ENCODE measurements at regions of chr3 and their contacts with region 1.

Region 1: GRCh38 chr3:106206146-106206545 is 337.3 kb upstream of the CBLB start:
- DNase-seq: no peak
- H3K4me3 Mint-ChIP-seq: peak overlapping the region; percentile 43
- H3K27ac Mint-ChIP-seq: peak overlapping the region; percentile 86
- H3K4me1 Mint-ChIP-seq: peaks cover 46% of the 10 kb centered on the region
- H3K27me3 Mint-ChIP-seq: no peaks in the 10 kb centered on the region

Region 2: DNA sequence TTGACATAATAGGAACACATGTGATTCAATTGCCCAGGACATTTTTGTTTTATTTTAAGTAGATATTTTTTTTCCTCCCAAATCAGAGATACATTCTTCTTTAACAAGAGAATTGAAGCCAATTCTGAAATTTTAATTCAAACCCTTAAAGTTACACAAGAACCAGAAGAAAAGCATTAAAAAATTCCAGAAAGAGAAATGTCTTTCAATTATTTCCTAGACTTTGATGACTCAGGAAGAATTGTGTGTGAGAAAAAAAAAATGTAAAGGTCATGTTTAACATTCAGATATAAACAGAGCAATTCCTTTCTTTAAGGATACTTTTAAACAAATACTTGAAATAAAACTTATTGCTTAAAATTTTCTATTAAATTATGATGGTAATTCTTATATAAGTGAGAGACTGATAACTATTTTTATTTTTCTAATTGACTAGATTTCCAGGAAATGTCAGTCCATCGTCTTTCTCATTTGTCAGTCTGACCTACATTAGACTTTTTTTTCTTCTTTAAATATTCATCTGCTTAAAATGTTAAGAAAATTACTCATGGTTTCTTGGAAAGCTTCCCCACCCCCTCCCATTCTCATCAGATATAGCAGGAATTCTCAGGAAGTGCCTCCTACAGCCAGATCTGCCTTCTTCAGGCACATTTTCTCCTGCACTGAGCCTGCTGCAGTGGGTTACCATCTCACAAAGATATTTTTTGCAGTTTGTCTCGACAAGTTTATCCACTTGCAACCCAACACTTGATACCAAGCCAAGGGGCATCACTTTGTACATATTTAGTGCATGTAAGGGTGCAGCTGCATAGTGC is 75.6 kb before region 1 on chr3:
- intact Hi-C with region 1: loop called (anchors 5 kb)
- DNase-seq: no peak
- H3K4me3 Mint-ChIP-seq: no peak overlapping the region
- H3K27ac Mint-ChIP-seq: peak overlapping the region; percentile 48
- H3K4me1 Mint-ChIP-seq: peaks cover 14% of the 10 kb centered on the region
- H3K27me3 Mint-ChIP-seq: no peaks in the 10 kb centered on the region

Region 3: GRCh38 chr3:106167728-106168127 is 38.4 kb before region 1 on chr3:
- intact Hi-C with region 1: no loop called
- DNase-seq: no peak
- H3K4me3 Mint-ChIP-seq: no peak overlapping the region
- H3K27ac Mint-ChIP-seq: no peak overlapping the region
- H3K4me1 Mint-ChIP-seq: peaks cover 24% of the 10 kb centered on the region
- H3K27me3 Mint-ChIP-seq: no peaks in the 10 kb centered on the region

Region 4: DNA sequence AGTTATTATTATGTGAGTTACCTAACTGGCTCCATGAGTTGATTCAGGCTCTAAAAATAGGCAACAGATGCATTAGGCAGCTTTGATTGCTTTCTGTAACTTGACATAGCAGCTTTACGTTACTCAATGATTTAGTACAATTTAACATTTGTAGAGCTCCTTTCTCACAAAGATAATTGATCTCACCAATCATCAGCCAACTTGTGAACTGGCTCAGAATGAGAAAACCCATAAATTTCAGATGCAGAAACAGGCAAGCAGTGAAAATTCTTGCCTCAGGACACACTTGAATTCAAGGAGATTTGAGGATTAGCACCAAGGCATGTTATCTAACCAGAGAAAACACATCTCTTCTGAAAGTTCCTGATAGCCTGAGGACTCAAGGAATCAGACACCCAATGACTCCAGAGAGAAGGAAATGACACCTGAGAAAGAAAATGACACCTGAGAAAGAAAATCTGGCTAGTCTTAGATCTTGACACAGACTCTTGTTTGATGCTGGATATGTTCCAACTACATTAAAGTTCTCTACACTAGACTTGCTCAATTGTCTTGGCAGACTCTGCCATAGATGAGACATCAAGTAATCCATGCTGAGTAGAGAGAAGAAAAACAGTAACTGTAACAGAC is 22.3 kb before region 1 on chr3:
- intact Hi-C with region 1: loop called (anchors 2 kb)
- DNase-seq: no peak
- H3K4me3 Mint-ChIP-seq: no peak overlapping the region
- H3K27ac Mint-ChIP-seq: peak overlapping the region; percentile 35
- H3K4me1 Mint-ChIP-seq: peaks cover 51% of the 10 kb centered on the region
- H3K27me3 Mint-ChIP-seq: no peaks in the 10 kb centered on the region

Measured in activated T-helper 2 cell treated with anti-CD3 and anti-CD28 coated beads, Interferon-gamma antibody, Interleukin-2, Interleukin-4, amounts not matched to agents 10 μg/mL and 5 μg/mL and 100 μg/mL, durations not matched to agents 14 hours and 24 hours and 36 hours (primary cell).